B cell (primary cell): ENCODE measurements at regions of chr1 and their contacts with region 1.

Region 1: GRCh38 chr1:154982897-154983648 is at the start of gene FLAD1:
- DNase-seq: peak; percentile 98
- ATAC-seq: peak; percentile 99
- H3K4me3 ChIP-seq: peak within 1 kb of the TSS; percentile 58 to 93 (median 85)
- H3K4me3 Mint-ChIP-seq: no peak within 1 kb of the TSS
- H3K27ac ChIP-seq: peak within 1 kb of the TSS; percentile 30 to 84
- H3K27ac Mint-ChIP-seq: peak within 1 kb of the TSS; percentile 50
- H3K4me1 ChIP-seq: peaks cover 13 to 19% of the 10 kb centered on the region in 2 donors
- H3K4me1 Mint-ChIP-seq: peaks cover 11% of the 10 kb centered on the region
- H3K27me3 ChIP-seq: no peaks in the 10 kb centered on the region
- H3K27me3 Mint-ChIP-seq: no peaks in the 10 kb centered on the region
- CTCF ChIP-seq: no peak
- total RNA-seq, gene FLAD1: 49.6 and 51.4 TPM in 2 replicates

Region 2: GRCh38 chr1:154352581-154353459 is 630.3 kb before region 1 on chr1:
- CTCF ChIA-PET with region 1: no interaction called
- POLR2A ChIA-PET with region 1: no interaction called
- intact Hi-C with region 1: no loop called
- DNase-seq: peak; percentile 40
- ATAC-seq: peak; percentile 58
- H3K4me3 ChIP-seq: peak overlapping the region; percentile 8 to 54 (median 37)
- H3K4me3 Mint-ChIP-seq: peak overlapping the region; percentile 76
- H3K27ac ChIP-seq: no peak overlapping the region
- H3K27ac Mint-ChIP-seq: peak overlapping the region; percentile 38
- H3K4me1 ChIP-seq: peaks cover 18 to 20% of the 10 kb centered on the region in 2 donors
- H3K4me1 Mint-ChIP-seq: peaks cover 18% of the 10 kb centered on the region
- H3K27me3 ChIP-seq: peaks cover 0 to 33% (median 12%) of the 10 kb centered on the region in 4 experiments
- H3K27me3 Mint-ChIP-seq: peaks cover 20% of the 10 kb centered on the region
- CTCF ChIP-seq: no peak

Region 3: GRCh38 chr1:154607609-154608396 is 375.3 kb before region 1 on chr1 and contains the start of gene ADAR:
- CTCF ChIA-PET with region 1: no interaction called
- POLR2A ChIA-PET with region 1: interaction called, 14 read pairs
- intact Hi-C with region 1: no loop called
- DNase-seq: peak; percentile 96
- ATAC-seq: peak; percentile 92
- H3K4me3 ChIP-seq: peak within 1 kb of the TSS; percentile 83 to 96 (median 93)
- H3K4me3 Mint-ChIP-seq: peak within 1 kb of the TSS; percentile 98
- H3K27ac ChIP-seq: peak within 1 kb of the TSS; percentile 86 to 97
- H3K27ac Mint-ChIP-seq: peak within 1 kb of the TSS; percentile 96
- H3K4me1 ChIP-seq: peaks cover 50 to 60% of the 10 kb centered on the region in 2 donors
- H3K4me1 Mint-ChIP-seq: peaks cover 61% of the 10 kb centered on the region
- H3K27me3 ChIP-seq: no peaks in the 10 kb centered on the region
- H3K27me3 Mint-ChIP-seq: no peaks in the 10 kb centered on the region
- CTCF ChIP-seq: no peak
- total RNA-seq, gene ADAR: 221 and 241 TPM in 2 replicates

Region 4: DNA sequence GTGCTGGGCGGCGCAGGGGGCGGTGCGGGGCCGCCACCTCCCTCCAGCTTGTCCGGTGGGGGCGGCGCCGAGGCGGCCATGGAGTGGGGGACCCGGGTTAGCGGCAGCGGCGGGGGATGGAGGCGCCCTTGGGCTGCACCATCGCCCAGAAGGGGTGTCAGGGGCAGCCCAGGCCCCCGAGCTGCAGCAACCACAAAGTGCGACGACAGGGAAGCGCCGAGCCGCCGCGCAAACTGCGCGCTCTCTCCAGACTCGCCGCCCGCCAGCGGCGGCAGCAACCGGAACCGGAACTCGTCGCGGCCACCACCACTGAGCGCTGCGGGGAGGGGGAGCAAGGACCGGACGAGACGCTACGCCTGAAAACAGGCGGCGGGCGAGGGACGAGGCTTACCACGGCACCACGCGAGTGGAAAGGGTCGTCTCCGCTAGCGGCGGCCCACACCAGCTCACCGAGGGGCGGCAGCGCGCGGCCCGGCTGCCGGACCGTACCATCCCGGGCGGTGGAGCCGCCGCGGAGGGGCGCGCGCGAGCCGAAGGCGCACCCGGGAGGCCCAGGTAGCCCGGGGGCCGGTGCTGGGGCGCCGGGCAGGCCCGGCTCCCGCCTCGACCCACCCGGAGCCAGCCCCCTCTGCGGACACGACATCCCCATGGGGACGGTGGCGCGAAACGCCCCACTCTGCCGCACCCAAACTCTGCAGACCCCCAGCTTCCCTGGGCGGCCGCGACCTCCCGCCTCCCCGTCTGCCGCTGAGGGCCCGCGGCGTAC is 21.4 kb before region 1 on chr1 and contains the start of gene PYGO2:
- CTCF ChIA-PET with region 1: interaction called, 16 read pairs
- POLR2A ChIA-PET with region 1: interaction called, 13 read pairs
- intact Hi-C with region 1: loop called (anchors 1 kb)
- DNase-seq: peak; percentile 93
- ATAC-seq: peak; percentile 86
- H3K4me3 ChIP-seq: peak within 1 kb of the TSS; percentile 62 to 91 (median 81)
- H3K4me3 Mint-ChIP-seq: peak within 1 kb of the TSS; percentile 91
- H3K27ac ChIP-seq: peak within 1 kb of the TSS; percentile 76 to 96
- H3K27ac Mint-ChIP-seq: peak within 1 kb of the TSS; percentile 94
- H3K4me1 ChIP-seq: peaks cover 22 to 35% of the 10 kb centered on the region in 2 donors
- H3K4me1 Mint-ChIP-seq: peaks cover 28% of the 10 kb centered on the region
- H3K27me3 ChIP-seq: no peaks in the 10 kb centered on the region
- H3K27me3 Mint-ChIP-seq: no peaks in the 10 kb centered on the region
- CTCF ChIP-seq: peak; percentile 82
- total RNA-seq, gene PYGO2: 47.5 and 52.7 TPM in 2 replicates

Region 5: GRCh38 chr1:154993572-154994268 is 10.6 kb after region 1 on chr1 and contains the start of gene LENEP:
- CTCF ChIA-PET with region 1: interaction called, 26 read pairs
- POLR2A ChIA-PET with region 1: interaction called, 9 read pairs
- intact Hi-C with region 1: no loop called
- DNase-seq: no peak
- ATAC-seq: no peak
- H3K4me3 ChIP-seq: no peak within 1 kb of the TSS
- H3K4me3 Mint-ChIP-seq: no peak within 1 kb of the TSS
- H3K27ac ChIP-seq: no peak within 1 kb of the TSS
- H3K27ac Mint-ChIP-seq: no peak within 1 kb of the TSS
- H3K4me1 ChIP-seq: peaks cover under 1 to 4% of the 10 kb centered on the region in 2 donors
- H3K4me1 Mint-ChIP-seq: peaks cover 20% of the 10 kb centered on the region
- H3K27me3 ChIP-seq: no peaks in the 10 kb centered on the region
- H3K27me3 Mint-ChIP-seq: no peaks in the 10 kb centered on the region
- CTCF ChIP-seq: no peak
- total RNA-seq, gene LENEP: 1.7 and 2.0 TPM in 2 replicates

Region 6: DNA sequence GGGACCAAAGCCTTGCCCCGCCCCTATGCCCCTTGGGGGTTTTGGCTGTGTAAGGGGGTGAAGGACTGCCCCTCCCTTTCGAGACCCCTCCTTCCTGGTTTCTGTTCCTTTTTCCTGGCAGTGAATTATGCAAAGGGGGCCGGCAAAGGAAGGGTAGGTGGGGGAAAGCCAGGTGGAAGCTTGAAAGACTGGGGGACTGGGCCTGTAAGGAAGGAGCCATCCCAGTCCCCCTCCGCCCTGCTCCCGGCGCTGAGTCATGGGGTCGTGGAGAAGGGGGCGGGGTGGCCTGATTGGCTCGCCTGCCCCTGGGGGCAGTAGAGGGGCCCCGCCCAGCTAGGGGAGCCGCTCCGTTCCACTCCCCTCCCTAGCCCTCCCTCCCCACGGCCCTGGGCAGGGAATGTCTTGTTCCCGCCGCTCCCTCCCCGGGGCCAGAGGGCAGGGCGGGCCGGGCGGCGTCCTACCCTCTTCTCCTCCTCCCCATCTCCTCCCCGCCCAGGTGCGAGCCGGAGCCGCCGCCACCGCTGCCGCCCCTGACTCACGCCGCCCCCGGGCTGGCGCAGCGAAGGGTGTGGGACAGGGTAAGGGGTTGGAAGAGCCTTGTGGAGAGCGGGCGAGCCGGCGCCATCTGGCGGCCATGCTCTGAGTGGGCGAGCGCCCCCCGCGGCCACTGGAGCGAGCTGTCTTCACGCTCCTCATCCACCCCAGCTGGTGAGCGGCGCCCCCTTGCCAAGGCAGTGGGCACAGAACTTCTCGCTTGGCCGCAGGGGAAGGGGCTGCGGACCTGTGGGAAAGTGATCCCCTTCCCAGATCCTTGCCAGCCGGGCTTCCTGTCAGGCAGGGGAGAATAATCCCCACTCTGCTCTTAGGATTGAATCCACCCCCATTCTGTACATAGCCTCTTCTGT is 34.2 kb after region 1 on chr1:
- CTCF ChIA-PET with region 1: interaction called, 110 read pairs
- POLR2A ChIA-PET with region 1: interaction called, 9 read pairs
- intact Hi-C with region 1: loop called (anchors 2 kb)
- DNase-seq: peak; percentile 93
- ATAC-seq: peak; percentile 75
- H3K4me3 ChIP-seq: peak overlapping the region; percentile 9 to 68 (median 49)
- H3K4me3 Mint-ChIP-seq: peak overlapping the region; percentile 84
- H3K27ac ChIP-seq: peak overlapping the region; percentile 88 to 89
- H3K27ac Mint-ChIP-seq: peak overlapping the region; percentile 93
- H3K4me1 ChIP-seq: peaks cover 53 to 67% of the 10 kb centered on the region in 2 donors
- H3K4me1 Mint-ChIP-seq: peaks cover 69% of the 10 kb centered on the region
- H3K27me3 ChIP-seq: no peaks in the 10 kb centered on the region
- H3K27me3 Mint-ChIP-seq: no peaks in the 10 kb centered on the region
- CTCF ChIP-seq: peak; percentile 99

Region 7: GRCh38 chr1:155050560-155051341 is 67.7 kb after region 1 on chr1 and contains the start of gene ADAM15:
- CTCF ChIA-PET with region 1: no interaction called
- POLR2A ChIA-PET with region 1: no interaction called
- intact Hi-C with region 1: loop called (anchors 2 kb)
- DNase-seq: peak; percentile 83
- ATAC-seq: peak; percentile 84
- H3K4me3 ChIP-seq: peak within 1 kb of the TSS; percentile 44 to 82 (median 76)
- H3K4me3 Mint-ChIP-seq: peak within 1 kb of the TSS; percentile 92
- H3K27ac ChIP-seq: peak within 1 kb of the TSS in 1 of 2 donors; percentile 18
- H3K27ac Mint-ChIP-seq: peak within 1 kb of the TSS; percentile 77
- H3K4me1 ChIP-seq: peaks cover 20 to 30% of the 10 kb centered on the region in 2 donors
- H3K4me1 Mint-ChIP-seq: peaks cover 25% of the 10 kb centered on the region
- H3K27me3 ChIP-seq: no peaks in the 10 kb centered on the region
- H3K27me3 Mint-ChIP-seq: no peaks in the 10 kb centered on the region
- CTCF ChIP-seq: peak; percentile 95
- total RNA-seq, gene ADAM15: 14.6 and 17.0 TPM in 2 replicates